ENCODE measurements at regions of chr14 and their contacts with region 1.

Region 1: GRCh38 chr14:22386924-22387775 is 201.9 kb downstream of the DAD1 start:
- DNase-seq: peak; percentile 88
- ATAC-seq: peak; percentile 77
- H3K4me3 ChIP-seq: no peak overlapping the region
- H3K27ac ChIP-seq: no peak overlapping the region
- H3K4me1 ChIP-seq: no peaks in the 10 kb centered on the region
- H3K27me3 ChIP-seq: peaks cover 0 to 10% of the 10 kb centered on the region in 2 experiments; a peak in 2 of 5 replicates
- CTCF ChIP-seq: peak; percentile 97
- EP300 ChIP-seq: no peak
- POLR2A ChIP-seq: no peak
- RAD21 ChIP-seq: peak; percentile 84

Region 2: GRCh38 chr14:22434030-22434429 is 46.9 kb after region 1 on chr14:
- CTCF ChIA-PET with region 1: interaction called, 19 read pairs
- POLR2A ChIA-PET with region 1: no interaction called
- in situ Hi-C with region 1: no loop called
- intact Hi-C with region 1: loop called (anchors 1 kb)
- DNase-seq: peak; percentile 47
- ATAC-seq: peak; percentile 81
- H3K4me3 ChIP-seq: no peak overlapping the region
- H3K27ac ChIP-seq: no peak overlapping the region
- H3K4me1 ChIP-seq: peaks cover 6% of the 10 kb centered on the region
- H3K27me3 ChIP-seq: no peaks in the 10 kb centered on the region
- CTCF ChIP-seq: peak; percentile 68
- EP300 ChIP-seq: no peak
- POLR2A ChIP-seq: no peak
- RAD21 ChIP-seq: no peak

Region 3: GRCh38 chr14:22472935-22473854 is 86.0 kb after region 1 on chr14:
- CTCF ChIA-PET with region 1: interaction called, 32 read pairs
- POLR2A ChIA-PET with region 1: no interaction called
- in situ Hi-C with region 1: loop called (anchors 5 kb)
- intact Hi-C with region 1: loop called (anchors 1 kb)
- DNase-seq: peak; percentile 56
- ATAC-seq: peak; percentile 65
- H3K4me3 ChIP-seq: no peak overlapping the region
- H3K27ac ChIP-seq: no peak overlapping the region
- H3K4me1 ChIP-seq: no peaks in the 10 kb centered on the region
- H3K27me3 ChIP-seq: peaks cover 0 to 4% of the 10 kb centered on the region in 2 experiments; a peak in 1 of 5 replicates
- CTCF ChIP-seq: peak; percentile 75
- EP300 ChIP-seq: no peak
- POLR2A ChIP-seq: no peak
- RAD21 ChIP-seq: peak; percentile 67

Region 4: GRCh38 chr14:22653012-22653621 is 266.0 kb after region 1 on chr14:
- CTCF ChIA-PET with region 1: interaction called, 3 read pairs
- POLR2A ChIA-PET with region 1: no interaction called
- in situ Hi-C with region 1: no loop called
- intact Hi-C with region 1: loop called (anchors 10 kb)
- DNase-seq: peak; percentile 86
- ATAC-seq: peak; percentile 98
- H3K4me3 ChIP-seq: no peak overlapping the region
- H3K27ac ChIP-seq: no peak overlapping the region
- H3K4me1 ChIP-seq: 0 out of 2 replicates have a peak, but pooled peaks cover 5% of the 10 kb centered on the region
- H3K27me3 ChIP-seq: peaks cover 3 to 36% of the 10 kb centered on the region in 2 experiments; a peak in 4 of 5 replicates
- CTCF ChIP-seq: peak; percentile 99
- EP300 ChIP-seq: no peak; a peak in 1 of 4 replicates
- POLR2A ChIP-seq: no peak
- RAD21 ChIP-seq: peak; percentile 94

Measured in HepG2 (cell line).